Heart left ventricle (tissue), 16 donors: ENCODE measurements at regions of chr19 and their contacts with region 1.

Region 1: DNA sequence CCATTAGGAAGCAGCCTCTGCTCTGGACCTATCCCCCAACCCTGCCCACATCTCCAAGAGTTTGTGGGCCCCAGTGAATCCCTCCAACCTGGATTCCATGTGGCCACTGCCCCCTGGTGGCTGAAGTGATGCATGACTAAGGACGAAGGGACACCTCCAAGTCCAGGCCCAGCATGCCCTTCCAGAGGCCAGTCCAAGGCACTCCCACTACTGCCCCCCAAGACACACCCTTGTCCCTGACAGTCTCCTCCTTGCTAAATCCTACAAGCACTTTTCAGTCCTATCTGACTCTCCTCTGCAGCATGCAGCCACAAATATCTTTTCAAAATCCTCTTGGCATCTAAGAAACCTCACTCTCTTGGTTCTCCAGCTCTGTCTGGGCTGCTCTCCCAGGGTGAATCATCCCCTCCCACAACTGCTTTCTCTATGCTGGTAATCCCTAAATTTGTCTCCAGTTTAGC is 33.0 kb downstream of the DEDD2 start:
- DNase-seq: peak; percentile 54 to 79 (median 73)
- ATAC-seq: peak in 3 of 4 donors; percentile 70 to 88 (median 80)
- H3K4me3 ChIP-seq: no peak overlapping the region
- H3K27ac ChIP-seq: peak overlapping the region in 2 of 12 donors; percentile 3 to 19
- H3K4me1 ChIP-seq: peaks cover 0 to 27% (median 0%) of the 10 kb centered on the region in 12 donors
- H3K27me3 ChIP-seq: peaks cover 13 to 39% (median 21%) of the 10 kb centered on the region in 9 donors
- CTCF ChIP-seq: peak; percentile 78 to 90 (median 84)
- POLR2A ChIP-seq: no peak

Region 2: DNA sequence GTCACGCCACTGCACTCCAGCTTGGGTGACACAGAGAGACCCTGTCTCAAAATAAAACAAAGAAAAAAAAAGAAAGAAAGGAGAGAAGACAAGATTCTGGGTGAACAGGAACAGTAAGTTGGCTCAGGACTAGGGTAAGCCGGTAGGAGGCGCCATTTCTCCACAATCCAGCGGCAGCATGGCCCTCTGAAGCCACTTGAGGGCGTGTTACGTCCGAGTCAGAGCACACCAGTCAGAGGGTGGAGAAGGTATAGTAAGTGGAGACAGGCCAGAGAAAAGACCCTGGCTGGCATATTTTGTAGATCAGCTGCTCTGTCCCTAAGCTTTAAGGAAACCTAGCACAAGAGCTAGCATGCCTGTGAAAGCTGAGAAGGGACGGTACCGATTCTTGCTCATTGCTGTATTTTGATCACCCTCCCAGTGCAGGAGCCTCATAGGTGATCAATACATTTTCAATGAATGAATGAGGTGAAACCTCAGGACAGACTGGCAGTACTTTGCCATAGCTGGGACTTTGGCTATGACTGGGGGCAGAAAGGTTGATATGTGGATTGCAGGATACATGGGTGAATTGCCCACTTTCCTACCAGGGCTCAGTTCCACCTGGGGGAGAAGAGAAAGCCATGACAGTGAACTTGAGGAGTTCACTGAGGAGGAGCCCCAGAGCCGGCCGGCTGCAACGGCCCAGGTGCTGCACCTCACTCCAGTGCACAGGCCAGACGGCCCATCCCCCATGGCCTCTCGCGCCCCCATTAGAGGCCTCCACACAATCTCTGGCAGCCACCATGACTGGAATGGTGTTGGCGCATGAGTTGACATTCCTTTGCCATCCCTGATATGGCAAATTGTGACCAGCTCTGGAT is 75.7 kb before region 1 on chr19:
- intact Hi-C with region 1: loop called in 5 of 10 experiments (anchors 2 to 10 kb)
- DNase-seq: peak; percentile 65 to 88 (median 76)
- ATAC-seq: peak; percentile 70 to 90 (median 86)
- H3K4me3 ChIP-seq: no peak overlapping the region
- H3K27ac ChIP-seq: no peak overlapping the region
- H3K4me1 ChIP-seq: peaks cover 0 to 21% (median 1%) of the 10 kb centered on the region in 12 donors
- H3K27me3 ChIP-seq: peaks cover 0 to 25% (median 4%) of the 10 kb centered on the region in 9 donors
- CTCF ChIP-seq: peak; percentile 76 to 100 (median 92)
- POLR2A ChIP-seq: no peak

Region 3: DNA sequence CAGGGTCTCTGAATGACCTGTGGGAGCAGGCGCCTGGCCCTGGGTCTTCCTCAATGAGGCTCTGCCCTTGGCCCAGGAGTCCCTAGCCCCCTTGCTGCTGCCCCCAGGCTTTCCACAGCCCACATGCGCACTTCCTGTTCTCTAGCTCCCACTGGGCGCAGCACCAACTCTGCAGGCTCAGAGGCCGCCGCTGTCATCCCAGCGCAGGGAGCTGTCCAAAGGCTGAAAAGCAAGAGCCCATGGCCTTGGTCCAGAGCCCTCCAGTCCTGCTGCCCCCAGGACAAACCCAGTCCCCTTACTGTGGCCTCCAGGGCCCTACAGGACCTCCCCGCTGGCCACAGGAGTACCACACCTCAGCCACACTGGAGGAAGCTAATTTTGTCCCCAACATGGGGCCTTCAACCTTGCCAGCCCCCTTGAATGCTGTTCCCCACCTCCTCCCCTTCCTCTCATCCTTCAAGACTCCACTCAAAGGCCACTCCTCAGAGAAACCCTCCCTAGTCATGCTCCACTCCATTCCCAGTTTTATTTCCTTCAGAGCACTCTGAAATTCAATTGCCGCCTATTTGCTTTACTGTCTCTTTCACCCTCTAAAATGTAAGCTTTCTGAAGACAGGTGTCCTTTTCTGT is 44.2 kb before region 1 on chr19:
- intact Hi-C with region 1: loop called in 2 of 10 experiments (anchors 2 kb)
- DNase-seq: peak; percentile 56 to 79 (median 69)
- ATAC-seq: peak; percentile 72 to 91 (median 86)
- H3K4me3 ChIP-seq: no peak overlapping the region
- H3K27ac ChIP-seq: no peak overlapping the region
- H3K4me1 ChIP-seq: no peaks in the 10 kb centered on the region
- H3K27me3 ChIP-seq: peaks cover 0 to 24% (median 0%) of the 10 kb centered on the region in 9 donors
- CTCF ChIP-seq: no peak
- POLR2A ChIP-seq: no peak

Region 4: GRCh38 chr19:42295831-42296525 is 111.5 kb after region 1 on chr19:
- intact Hi-C with region 1: no loop called
- DNase-seq: peak; percentile 76 to 90 (median 82)
- ATAC-seq: peak; percentile 42 to 84 (median 77)
- H3K4me3 ChIP-seq: no peak overlapping the region
- H3K27ac ChIP-seq: no peak overlapping the region
- H3K4me1 ChIP-seq: no peaks in the 10 kb centered on the region
- H3K27me3 ChIP-seq: no peaks in the 10 kb centered on the region
- CTCF ChIP-seq: peak; percentile 89 to 97 (median 94)
- POLR2A ChIP-seq: no peak